Posterior vena cava (tissue), 2 donors: ENCODE measurements at regions of chr2 and their contacts with region 1.

Region 1: DNA sequence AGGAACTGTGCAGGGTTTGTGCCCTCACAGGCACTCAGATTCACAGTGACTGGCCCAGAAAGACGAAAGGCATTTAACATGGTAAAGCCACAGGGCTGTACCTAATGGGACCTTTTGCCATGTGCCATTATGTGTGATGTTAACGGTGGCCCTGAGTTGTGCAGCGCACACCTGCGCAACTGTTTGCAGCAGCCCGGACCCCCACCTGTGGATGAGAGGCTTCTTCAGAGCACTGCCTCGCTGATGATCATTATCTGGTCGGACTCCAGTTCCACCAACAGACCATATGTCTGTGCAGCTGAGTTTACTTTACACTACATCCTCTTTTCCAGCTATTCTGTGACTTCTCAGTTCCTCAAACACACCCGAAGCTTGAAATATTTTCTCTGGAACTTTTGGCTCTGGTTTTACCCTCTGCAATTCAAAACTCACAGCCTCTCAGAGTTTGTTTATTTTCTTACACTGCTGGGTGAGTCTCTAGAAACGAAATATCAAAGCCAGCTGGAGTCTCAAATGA is 35.6 kb upstream of the UBE2F start:
- DNase-seq: no peak

Region 2: GRCh38 chr2:237968121-237968862 is 37.0 kb after region 1 on chr2:
- intact Hi-C with region 1: loop called in 1 of 2 experiments (anchors 2 kb)
- DNase-seq: no peak

Region 3: GRCh38 chr2:238087211-238087610 is 155.9 kb after region 1 on chr2:
- intact Hi-C with region 1: no loop called
- DNase-seq: no peak